Heart right ventricle (tissue), 16 donors: ENCODE measurements at regions of chr1 and their contacts with region 1.

Region 1: GRCh38 chr1:170692866-170693575 is 29.1 kb downstream of the PRRX1 start:
- DNase-seq: no peak
- ATAC-seq: peak; percentile 49 to 91 (median 71)
- H3K4me3 ChIP-seq: no peak overlapping the region
- H3K27ac ChIP-seq: peak overlapping the region in 9 of 10 donors; percentile 26 to 81 (median 42)
- H3K4me1 ChIP-seq: peaks cover 7 to 83% (median 70%) of the 10 kb centered on the region in 9 donors
- H3K27me3 ChIP-seq: no peaks in the 10 kb centered on the region
- CTCF ChIP-seq: no peak

Region 2: GRCh38 chr1:170729225-170730002 is 36.4 kb after region 1 on chr1:
- intact Hi-C with region 1: loop called in 1 of 10 experiments (anchors 5 kb)
- DNase-seq: peak in 1 of 2 donors; percentile 26
- ATAC-seq: peak; percentile 70 to 96 (median 90)
- H3K4me3 ChIP-seq: no peak overlapping the region
- H3K27ac ChIP-seq: peak overlapping the region; percentile 12 to 81 (median 70)
- H3K4me1 ChIP-seq: peaks cover 5 to 62% (median 34%) of the 10 kb centered on the region in 9 donors
- H3K27me3 ChIP-seq: no peaks in the 10 kb centered on the region
- CTCF ChIP-seq: no peak

Region 3: DNA sequence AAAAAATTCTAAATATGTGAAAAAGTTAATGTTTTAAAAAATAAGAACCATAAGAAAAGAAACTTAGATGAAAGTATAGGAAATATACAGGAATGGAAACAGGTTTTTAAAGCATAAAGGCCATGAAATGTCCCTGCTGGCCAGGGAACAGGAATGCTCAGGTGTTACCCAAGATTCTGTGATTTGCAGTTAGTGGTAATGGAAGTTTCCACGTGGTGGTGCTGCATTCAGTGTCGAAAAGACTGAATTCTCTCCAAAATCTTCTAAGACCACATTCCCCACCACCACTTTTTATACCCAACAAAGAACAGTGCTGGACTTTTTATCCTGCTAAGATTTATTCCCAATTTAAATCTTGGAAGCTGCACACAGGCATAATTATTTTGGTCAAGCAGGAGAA is 97.2 kb after region 1 on chr1:
- intact Hi-C with region 1: no loop called
- DNase-seq: no peak
- ATAC-seq: no peak
- H3K4me3 ChIP-seq: no peak overlapping the region
- H3K27ac ChIP-seq: no peak overlapping the region
- H3K4me1 ChIP-seq: no peaks in the 10 kb centered on the region
- H3K27me3 ChIP-seq: no peaks in the 10 kb centered on the region
- CTCF ChIP-seq: no peak